ENCODE measurements at regions of chr4 and their contacts with region 1.

Region 1: DNA sequence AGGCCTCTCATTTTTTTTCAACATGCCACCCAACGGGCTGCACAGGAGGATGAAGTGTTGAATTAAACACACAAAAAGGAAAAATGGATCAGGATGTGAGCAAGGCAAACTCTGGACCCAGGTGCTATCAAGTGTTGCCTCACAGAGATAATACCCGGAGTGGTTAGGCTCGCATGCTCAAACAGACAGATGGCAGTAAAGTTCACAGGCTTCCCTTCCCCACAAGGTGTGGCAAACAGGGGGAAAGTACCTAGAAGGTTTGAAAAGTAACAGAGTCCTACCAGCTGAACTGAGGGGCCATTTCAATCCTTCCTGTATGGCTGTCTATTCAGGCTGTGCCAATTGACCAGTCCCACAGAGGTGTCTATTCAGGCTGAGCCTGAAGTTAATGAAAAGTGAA is 123.9 kb upstream of the GC start:
- DNase-seq: no peak
- H3K4me3 Mint-ChIP-seq: no peak overlapping the region
- H3K27ac Mint-ChIP-seq: no peak overlapping the region
- H3K4me1 Mint-ChIP-seq: no peaks in the 10 kb centered on the region
- H3K27me3 Mint-ChIP-seq: no peaks in the 10 kb centered on the region

Region 2: GRCh38 chr4:70099206-70099605 is 1808.6 kb before region 1 on chr4:
- intact Hi-C with region 1: loop called (anchors 5 kb)
- DNase-seq: no peak
- H3K4me3 Mint-ChIP-seq: no peak overlapping the region
- H3K27ac Mint-ChIP-seq: no peak overlapping the region
- H3K4me1 Mint-ChIP-seq: no peaks in the 10 kb centered on the region
- H3K27me3 Mint-ChIP-seq: no peaks in the 10 kb centered on the region

Region 3: DNA sequence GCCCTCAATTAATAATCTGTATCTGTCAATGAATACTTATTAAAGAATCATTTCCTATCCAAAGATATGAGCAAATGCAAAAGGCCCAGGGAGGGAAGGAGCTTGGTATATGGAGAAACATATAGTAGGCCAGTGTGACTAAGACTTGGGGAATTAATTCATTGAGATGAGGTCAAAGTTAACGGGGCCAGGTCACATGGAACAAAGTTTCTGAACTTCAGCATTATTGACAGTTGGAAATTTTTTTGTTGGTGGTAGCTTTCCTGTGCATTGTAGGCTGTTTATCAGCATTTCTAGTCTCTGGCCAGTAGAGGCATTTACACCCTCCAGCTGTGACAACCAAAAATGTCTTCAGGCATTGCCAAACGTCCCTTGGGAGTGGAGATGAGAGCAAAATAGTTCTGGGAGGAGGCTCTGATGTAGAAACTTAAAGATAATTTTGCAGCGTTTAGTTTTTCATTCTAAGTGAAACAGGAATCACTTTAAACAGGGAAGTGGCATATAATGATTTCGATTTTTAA is 367.0 kb before region 1 on chr4:
- intact Hi-C with region 1: no loop called
- DNase-seq: no peak
- H3K4me3 Mint-ChIP-seq: no peak overlapping the region
- H3K27ac Mint-ChIP-seq: no peak overlapping the region
- H3K4me1 Mint-ChIP-seq: no peaks in the 10 kb centered on the region
- H3K27me3 Mint-ChIP-seq: no peaks in the 10 kb centered on the region

Region 4: GRCh38 chr4:71584585-71584984 is 323.2 kb before region 1 on chr4:
- intact Hi-C with region 1: no loop called
- DNase-seq: no peak
- H3K4me3 Mint-ChIP-seq: no peak overlapping the region
- H3K27ac Mint-ChIP-seq: no peak overlapping the region
- H3K4me1 Mint-ChIP-seq: no peaks in the 10 kb centered on the region
- H3K27me3 Mint-ChIP-seq: no peaks in the 10 kb centered on the region

Measured in activated T-helper 1 cell treated with anti-CD3 and anti-CD28 coated beads, Interleukin-12 subunit alpha, Interleukin-12 subunit beta, Interleukin-2, Interleukin-4 antibody, amounts not matched to agents 30 ng/mL and 10 ng/mL and 1 ng/mL, durations not matched to agents 14 hours and 24 hours and 36 hours (primary cell).